Sigmoid colon (tissue), 7 donors: ENCODE measurements at regions of chr2 and their contacts with region 1.

Region 1: GRCh38 chr2:68121873-68122679 is 35.6 kb upstream of the PNO1 start:
- DNase-seq: peak; percentile 91
- H3K4me3 ChIP-seq: no peak overlapping the region
- H3K27ac ChIP-seq: no peak overlapping the region
- H3K4me1 ChIP-seq: peaks cover 0 to 6% (median 3%) of the 10 kb centered on the region in 4 donors
- H3K27me3 ChIP-seq: no peaks in the 10 kb centered on the region
- CTCF ChIP-seq: peak; percentile 76 to 97 (median 89)
- EP300 ChIP-seq: no peak
- POLR2A ChIP-seq: no peak

Region 2: DNA sequence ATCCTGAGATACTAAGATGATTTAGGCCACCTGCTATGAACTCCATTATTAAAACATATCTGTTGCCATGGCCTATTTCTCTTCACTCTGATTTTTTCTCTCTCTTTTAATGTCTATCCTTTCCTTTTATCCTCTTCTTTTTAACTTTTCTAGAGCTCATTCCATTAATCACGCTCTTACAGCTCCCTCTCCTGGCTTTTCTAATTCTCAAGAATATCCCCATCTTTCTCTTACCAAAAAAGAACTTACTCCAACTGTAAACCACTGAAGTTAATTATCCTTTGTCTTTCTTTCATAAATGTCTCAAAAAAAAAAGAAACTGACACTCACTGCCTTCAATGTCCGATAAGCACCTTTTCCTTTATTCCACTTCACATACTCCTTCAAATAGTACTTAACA is 122.4 kb after region 1 on chr2:
- intact Hi-C with region 1: loop called (anchors 10 kb)
- DNase-seq: no peak
- H3K4me3 ChIP-seq: no peak overlapping the region
- H3K27ac ChIP-seq: peak overlapping the region in 3 of 4 donors; percentile 23 to 48 (median 40)
- H3K4me1 ChIP-seq: peaks cover 0 to 99% (median 76%) of the 10 kb centered on the region in 4 donors
- H3K27me3 ChIP-seq: no peaks in the 10 kb centered on the region
- CTCF ChIP-seq: peak in 2 of 4 experiments; percentile 24 to 25
- EP300 ChIP-seq: no peak
- POLR2A ChIP-seq: no peak

Region 3: GRCh38 chr2:68282811-68283418 is 160.8 kb after region 1 on chr2:
- intact Hi-C with region 1: loop called (anchors 2 kb)
- DNase-seq: no peak
- H3K4me3 ChIP-seq: no peak overlapping the region
- H3K27ac ChIP-seq: no peak overlapping the region
- H3K4me1 ChIP-seq: peaks cover 0 to 6% (median 6%) of the 10 kb centered on the region in 4 donors
- H3K27me3 ChIP-seq: no peaks in the 10 kb centered on the region
- CTCF ChIP-seq: peak; percentile 20 to 69 (median 64)
- EP300 ChIP-seq: no peak
- POLR2A ChIP-seq: no peak

Region 4: GRCh38 chr2:68441179-68441993 is 319.3 kb after region 1 on chr2:
- intact Hi-C with region 1: loop called (anchors 5 kb)
- DNase-seq: peak; percentile 93
- H3K4me3 ChIP-seq: no peak overlapping the region
- H3K27ac ChIP-seq: peak overlapping the region in 3 of 4 donors; percentile 12 to 55 (median 40)
- H3K4me1 ChIP-seq: peaks cover 0 to 22% (median 14%) of the 10 kb centered on the region in 4 donors
- H3K27me3 ChIP-seq: no peaks in the 10 kb centered on the region
- CTCF ChIP-seq: peak; percentile 81 to 94 (median 89)
- EP300 ChIP-seq: no peak
- POLR2A ChIP-seq: no peak